HepG2 (cell line): ENCODE measurements at regions of chr1 and their contacts with region 1.

Region 1: DNA sequence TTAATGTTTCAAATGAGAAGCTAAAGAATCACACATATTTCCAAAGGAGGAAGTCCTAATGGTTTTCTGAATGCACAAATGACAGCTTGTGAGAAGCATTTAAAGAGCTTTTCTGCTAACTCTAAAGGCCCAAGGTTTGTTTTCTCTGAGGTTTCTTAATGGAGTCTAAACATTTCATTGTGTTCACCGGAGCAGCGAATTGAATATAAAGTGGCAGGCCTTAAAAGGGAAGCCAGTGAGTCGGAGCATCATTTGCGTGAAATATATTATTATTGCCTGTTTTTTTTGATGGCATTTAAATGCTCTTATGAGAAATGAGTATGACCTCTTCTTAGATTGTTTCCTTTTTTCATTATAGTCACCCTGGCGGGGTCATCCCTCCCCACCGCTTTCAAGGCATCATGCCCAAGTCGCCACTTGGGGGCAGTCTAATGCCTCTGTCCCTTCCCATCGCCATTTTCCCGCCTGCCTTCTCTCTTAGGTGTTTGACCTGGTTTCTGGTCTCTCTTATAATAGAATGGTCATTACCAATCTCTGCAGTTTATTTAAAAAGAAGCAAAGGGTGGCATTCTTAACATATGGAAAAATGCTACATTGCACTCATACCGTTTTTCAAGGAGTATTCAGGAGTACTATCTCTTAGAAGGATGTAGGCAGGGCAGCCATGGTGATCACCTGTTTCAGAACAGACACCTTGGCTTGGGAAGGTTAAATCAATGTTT is 25.3 kb upstream of the OVAAL start:
- DNase-seq: peak; percentile 53
- ATAC-seq: peak; percentile 90
- H3K4me3 ChIP-seq: peak overlapping the region in 1 of 3 experiments; percentile 4; a peak in 2 of 6 replicates
- H3K27ac ChIP-seq: no peak overlapping the region
- H3K4me1 ChIP-seq: peaks cover 22% of the 10 kb centered on the region; the same call in 1 of the 2 replicates
- H3K27me3 ChIP-seq: peaks cover 2 to 4% of the 10 kb centered on the region in 2 experiments; a peak in 3 of 5 replicates
- CTCF ChIP-seq: peak; percentile 88
- EP300 ChIP-seq: no peak
- POLR2A ChIP-seq: no peak
- RAD21 ChIP-seq: peak; percentile 76

Region 2: GRCh38 chr1:180470031-180470430 is 63.4 kb before region 1 on chr1:
- CTCF ChIA-PET with region 1: no interaction called
- POLR2A ChIA-PET with region 1: no interaction called
- in situ Hi-C with region 1: no loop called
- intact Hi-C with region 1: no loop called
- DNase-seq: no peak
- ATAC-seq: no peak
- H3K4me3 ChIP-seq: no peak overlapping the region
- H3K27ac ChIP-seq: no peak overlapping the region
- H3K4me1 ChIP-seq: peaks cover 13% of the 10 kb centered on the region
- H3K27me3 ChIP-seq: no peaks in the 10 kb centered on the region
- CTCF ChIP-seq: no peak
- EP300 ChIP-seq: no peak
- POLR2A ChIP-seq: no peak
- RAD21 ChIP-seq: no peak

Region 3: DNA sequence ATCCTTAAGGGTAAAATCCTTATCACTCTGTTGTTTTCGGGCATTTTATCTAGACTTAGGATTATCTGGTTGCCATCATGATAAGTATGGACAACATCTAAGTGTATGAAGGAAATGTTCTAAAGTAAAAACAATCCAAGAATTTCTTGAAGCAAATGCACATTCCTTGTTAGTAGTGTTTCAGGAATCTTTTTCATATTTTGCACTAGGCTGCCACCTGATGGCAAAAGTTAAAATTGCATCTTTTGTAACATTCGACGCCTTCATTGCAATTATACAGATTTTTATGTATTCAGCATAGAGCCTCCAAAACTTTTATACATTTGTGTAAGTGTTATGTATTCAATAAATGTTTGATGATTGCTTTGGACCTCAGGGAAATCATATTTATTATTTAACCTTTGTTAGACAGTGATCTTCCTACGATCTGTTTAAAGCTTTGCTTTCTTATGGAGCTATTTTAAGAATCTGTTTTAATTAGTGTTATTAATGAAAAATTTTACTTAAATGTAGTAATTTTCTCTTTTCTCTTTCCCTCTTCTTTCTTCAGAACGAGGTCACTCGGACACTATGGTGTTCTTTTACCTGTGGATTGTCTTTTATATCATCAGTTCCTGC is 329.8 kb after region 1 on chr1:
- CTCF ChIA-PET with region 1: interaction called, 31 read pairs
- POLR2A ChIA-PET with region 1: no interaction called
- in situ Hi-C with region 1: no loop called
- intact Hi-C with region 1: loop called (anchors 5 kb)
- DNase-seq: peak; percentile 31
- ATAC-seq: no peak
- H3K4me3 ChIP-seq: no peak overlapping the region
- H3K27ac ChIP-seq: no peak overlapping the region
- H3K4me1 ChIP-seq: no peaks in the 10 kb centered on the region
- H3K27me3 ChIP-seq: no peaks in the 10 kb centered on the region
- CTCF ChIP-seq: peak; percentile 76
- EP300 ChIP-seq: no peak
- POLR2A ChIP-seq: no peak
- RAD21 ChIP-seq: peak; percentile 73